Posterior vena cava (tissue), 2 donors: ENCODE measurements at regions of chr22 and their contacts with region 1.

Region 1: DNA sequence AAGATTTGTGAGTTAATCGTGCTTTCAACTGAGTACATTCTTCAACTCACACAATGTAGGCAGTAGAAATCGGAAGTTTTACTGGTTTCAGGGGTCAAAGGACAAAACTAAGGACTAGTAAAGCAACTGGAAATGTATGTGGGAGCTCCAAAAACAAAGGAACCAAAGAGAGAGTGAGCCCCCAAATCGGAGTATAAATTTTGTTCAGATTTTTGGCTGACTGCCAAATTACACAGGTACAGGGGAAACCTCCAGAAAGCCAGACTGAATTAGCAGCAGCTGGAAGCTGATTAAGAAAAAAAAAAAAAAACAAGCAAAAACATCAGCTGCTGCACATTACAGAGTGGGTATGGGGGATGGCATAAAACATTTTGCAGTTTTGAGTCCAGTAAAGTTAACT is 75.2 kb upstream of the GNAZ start:
- DNase-seq: no peak

Region 2: GRCh38 chr22:22977479-22978200 is 17.5 kb before region 1 on chr22:
- intact Hi-C with region 1: loop called in 1 of 2 experiments (anchors 1 kb)
- DNase-seq: no peak

Region 3: DNA sequence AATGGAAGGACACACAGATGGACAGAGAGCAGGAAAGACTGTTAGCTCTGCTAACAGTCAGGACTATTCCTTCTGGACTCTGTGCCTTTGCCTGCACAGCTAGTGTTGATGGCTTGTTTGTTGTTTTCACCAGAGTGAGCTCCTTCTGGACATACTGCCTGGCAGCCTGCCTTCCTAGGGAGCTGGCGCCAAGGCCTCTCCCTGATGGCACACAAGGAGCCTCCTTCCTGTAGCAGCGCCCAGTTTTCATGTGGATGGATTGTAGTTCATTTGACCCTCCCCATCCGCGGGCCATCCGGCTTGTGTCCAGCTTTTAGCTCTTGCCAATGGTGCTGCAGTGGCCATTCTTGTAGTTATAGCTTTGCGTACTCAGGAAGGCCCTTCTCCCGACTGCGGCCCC is 168.5 kb after region 1 on chr22:
- intact Hi-C with region 1: no loop called
- DNase-seq: no peak